ENCODE measurements at regions of chr15 and their contacts with region 1.

Region 1: GRCh38 chr15:74540761-74541493 is at the start of gene ARID3B:
- DNase-seq: peak; percentile 79
- ATAC-seq: peak; percentile 86
- H3K4me3 Mint-ChIP-seq: peak within 1 kb of the TSS; percentile 98
- H3K27ac Mint-ChIP-seq: peak within 1 kb of the TSS; percentile 95
- H3K4me1 Mint-ChIP-seq: peaks cover 49% of the 10 kb centered on the region
- H3K27me3 Mint-ChIP-seq: no peaks in the 10 kb centered on the region
- CTCF ChIP-seq: no peak
- total RNA-seq, gene ARID3B: 24.8 and 26.9 TPM in 2 replicates

Region 2: DNA sequence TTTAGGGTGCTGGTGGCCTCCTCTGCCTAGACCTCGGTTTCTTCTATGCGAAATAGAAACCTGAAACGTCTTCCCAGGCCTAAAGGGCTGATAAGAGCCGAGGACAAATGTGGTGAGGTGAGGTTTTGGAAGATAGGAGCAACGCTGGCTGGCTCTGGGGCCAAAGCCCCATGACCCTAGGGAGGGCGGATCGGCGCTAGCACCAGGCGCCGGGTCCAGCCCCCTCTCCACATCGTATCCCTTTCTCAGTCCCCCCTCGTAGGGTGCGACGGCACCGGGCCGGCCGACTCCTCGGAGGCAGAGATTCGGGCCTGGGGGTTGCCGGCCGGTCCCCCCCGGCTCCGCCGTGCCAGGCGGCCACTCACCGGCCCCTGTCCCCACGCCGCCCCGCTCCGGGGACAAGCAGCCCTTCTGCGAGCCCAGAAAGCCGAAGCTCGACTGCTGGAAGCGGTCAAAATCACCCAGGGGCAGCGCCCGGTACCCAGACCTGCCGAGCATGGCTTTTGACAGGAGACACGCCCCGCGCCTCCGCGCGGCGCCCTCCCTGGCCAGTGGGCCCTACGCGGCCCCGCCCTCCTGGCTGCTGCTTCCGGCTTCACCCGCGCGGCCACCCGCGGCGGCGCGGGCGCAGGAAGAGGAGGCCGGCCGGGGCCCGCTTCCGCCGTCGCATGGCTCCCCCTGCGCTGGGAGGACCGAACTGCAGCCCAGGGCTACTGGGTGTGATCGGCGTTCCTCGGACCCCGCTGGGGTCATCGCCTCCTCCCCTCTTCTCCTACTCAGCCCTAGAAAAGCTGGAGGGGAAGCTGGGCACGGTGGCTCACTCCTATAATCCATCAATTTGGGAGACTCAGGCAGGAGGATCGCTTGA is 549.0 kb before region 1 on chr15 and contains the start of gene STOML1:
- CTCF ChIA-PET with region 1: no interaction called
- POLR2A ChIA-PET with region 1: interaction called, 5 read pairs
- intact Hi-C with region 1: loop called (anchors 2 kb)
- DNase-seq: peak; percentile 98
- ATAC-seq: peak; percentile 77
- H3K4me3 Mint-ChIP-seq: peak within 1 kb of the TSS; percentile 86
- H3K27ac Mint-ChIP-seq: peak within 1 kb of the TSS; percentile 69
- H3K4me1 Mint-ChIP-seq: peaks cover 66% of the 10 kb centered on the region
- H3K27me3 Mint-ChIP-seq: no peaks in the 10 kb centered on the region
- CTCF ChIP-seq: no peak
- total RNA-seq, gene STOML1: 8.9 and 10.6 TPM in 2 replicates

Region 3: GRCh38 chr15:74489518-74490338 is 51.2 kb before region 1 on chr15:
- CTCF ChIA-PET with region 1: no interaction called
- POLR2A ChIA-PET with region 1: no interaction called
- intact Hi-C with region 1: loop called (anchors 2 kb)
- DNase-seq: peak; percentile 60
- ATAC-seq: peak; percentile 96
- H3K4me3 Mint-ChIP-seq: peak overlapping the region; percentile 51
- H3K27ac Mint-ChIP-seq: peak overlapping the region; percentile 8
- H3K4me1 Mint-ChIP-seq: peaks cover 11% of the 10 kb centered on the region
- H3K27me3 Mint-ChIP-seq: no peaks in the 10 kb centered on the region
- CTCF ChIP-seq: peak; percentile 25

Region 4: DNA sequence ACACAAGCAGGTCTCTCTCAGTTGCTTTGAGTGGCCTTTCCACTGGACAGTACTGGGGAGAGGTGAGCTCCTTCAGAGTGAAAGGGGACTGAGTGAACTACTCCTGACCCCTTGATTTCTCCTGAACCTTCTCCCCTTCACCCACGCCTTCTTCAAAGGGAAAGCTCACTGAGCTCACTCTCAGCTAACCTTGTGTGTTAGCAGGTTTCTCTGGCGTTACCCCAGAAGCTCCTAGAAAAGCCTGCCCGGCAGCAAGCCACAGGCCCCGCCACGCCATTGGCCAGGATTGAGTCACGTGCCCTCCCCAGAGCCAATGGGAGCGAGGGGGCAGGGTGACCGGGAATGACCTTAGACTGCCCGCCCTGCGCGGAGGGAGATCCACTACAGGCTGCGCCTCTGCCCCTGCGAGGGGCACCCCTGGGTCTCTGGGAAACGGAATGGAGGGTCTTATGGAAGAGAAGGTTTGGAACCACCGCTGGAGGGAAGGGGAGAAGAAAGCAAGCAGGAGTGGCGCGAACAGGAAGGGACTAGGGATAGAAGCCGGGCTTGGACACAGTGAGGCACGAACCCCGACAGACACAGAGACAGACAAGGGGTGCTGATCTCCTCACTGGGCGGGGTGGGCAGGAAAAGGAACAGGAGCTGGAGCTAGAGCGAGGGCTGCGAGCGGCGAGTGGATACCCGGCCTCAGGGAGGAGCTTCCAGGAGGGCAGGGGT is 57.4 kb after region 1 on chr15:
- CTCF ChIA-PET with region 1: no interaction called
- POLR2A ChIA-PET with region 1: interaction called, 5 read pairs
- intact Hi-C with region 1: loop called (anchors 2 kb)
- DNase-seq: peak; percentile 80
- ATAC-seq: peak; percentile 99
- H3K4me3 Mint-ChIP-seq: peak overlapping the region; percentile 96
- H3K27ac Mint-ChIP-seq: peak overlapping the region; percentile 88
- H3K4me1 Mint-ChIP-seq: peaks cover 19% of the 10 kb centered on the region
- H3K27me3 Mint-ChIP-seq: no peaks in the 10 kb centered on the region
- CTCF ChIP-seq: no peak

Measured in activated B cell treated with CpG ODN at 0.5 μM for 24 hours (primary cell).